Tibial artery (tissue), 4 donors: ENCODE measurements at regions of chr17 and their contacts with region 1.

Region 1: GRCh38 chr17:66906321-66907278 is 57.9 kb upstream of the CACNG4 start:
- DNase-seq: peak; percentile 64 to 75
- H3K4me3 ChIP-seq: no peak overlapping the region
- H3K27ac ChIP-seq: no peak overlapping the region
- H3K4me1 ChIP-seq: peaks cover 0 to 14% (median 5%) of the 10 kb centered on the region in 4 donors
- H3K27me3 ChIP-seq: no peaks in the 10 kb centered on the region
- CTCF ChIP-seq: peak; percentile 65 to 79

Region 2: GRCh38 chr17:66715745-66716156 is 190.8 kb before region 1 on chr17:
- intact Hi-C with region 1: loop called (anchors 5 kb)
- DNase-seq: no peak
- H3K4me3 ChIP-seq: no peak overlapping the region
- H3K27ac ChIP-seq: no peak overlapping the region
- H3K4me1 ChIP-seq: no peaks in the 10 kb centered on the region
- H3K27me3 ChIP-seq: no peaks in the 10 kb centered on the region
- CTCF ChIP-seq: peak; percentile 56 to 63